ENCODE measurements at regions of chr4 and their contacts with region 1.

Region 1: DNA sequence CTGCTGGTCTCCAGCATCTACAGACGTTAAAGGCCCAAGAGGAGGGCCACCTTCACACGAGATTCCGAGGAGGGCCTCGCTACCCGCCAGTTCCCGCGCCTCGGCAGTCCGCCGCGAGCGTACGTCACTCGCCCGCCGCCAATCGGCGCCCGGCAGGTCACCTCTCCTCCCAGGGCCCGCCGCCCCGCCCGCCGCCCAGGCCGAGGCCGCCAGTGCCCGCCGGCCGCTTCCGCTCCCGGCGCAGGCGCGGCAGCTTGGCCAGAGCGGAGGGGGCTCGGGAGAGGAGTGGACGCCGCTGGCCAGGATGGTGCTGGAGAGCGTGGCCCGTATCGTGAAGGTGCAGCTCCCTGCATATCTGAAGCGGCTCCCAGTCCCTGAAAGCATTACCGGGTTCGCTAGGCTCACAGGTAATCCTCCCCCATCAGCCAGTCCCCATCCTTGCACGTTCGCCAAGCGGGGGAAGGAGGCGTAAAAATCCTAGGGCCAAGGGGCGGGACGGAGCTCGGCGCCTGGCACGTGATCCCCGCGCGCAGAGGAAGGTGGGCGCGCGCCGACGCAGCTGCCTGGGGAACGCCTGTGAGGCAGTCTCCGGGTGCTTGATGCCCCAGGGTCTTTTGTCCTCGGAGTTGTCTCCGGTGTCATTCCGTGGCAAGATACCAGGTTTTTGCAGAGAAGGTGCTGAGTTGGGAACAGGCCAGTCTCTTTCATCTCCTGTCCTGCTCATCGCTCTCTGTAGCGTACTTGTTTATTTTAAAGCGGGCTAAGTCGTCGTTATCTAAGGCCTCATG is at the start of gene CISD2:
- DNase-seq: peak; percentile 79 to 96 (median 86)
- ATAC-seq: peak; percentile 81
- H3K4me3 ChIP-seq: peak within 1 kb of the TSS; percentile 70
- H3K4me3 Mint-ChIP-seq: peak within 1 kb of the TSS; percentile 87
- H3K27ac ChIP-seq: peak within 1 kb of the TSS; percentile 94 to 96
- H3K27ac Mint-ChIP-seq: peak within 1 kb of the TSS; percentile 98
- H3K4me1 ChIP-seq: peaks cover 21% of the 10 kb centered on the region
- H3K4me1 Mint-ChIP-seq: peaks cover 77% of the 10 kb centered on the region
- H3K27me3 ChIP-seq: no peaks in the 10 kb centered on the region
- H3K27me3 Mint-ChIP-seq: no peaks in the 10 kb centered on the region
- CTCF ChIP-seq: no peak
- total RNA-seq, gene CISD2: 12.8 to 13.7 TPM

Region 2: DNA sequence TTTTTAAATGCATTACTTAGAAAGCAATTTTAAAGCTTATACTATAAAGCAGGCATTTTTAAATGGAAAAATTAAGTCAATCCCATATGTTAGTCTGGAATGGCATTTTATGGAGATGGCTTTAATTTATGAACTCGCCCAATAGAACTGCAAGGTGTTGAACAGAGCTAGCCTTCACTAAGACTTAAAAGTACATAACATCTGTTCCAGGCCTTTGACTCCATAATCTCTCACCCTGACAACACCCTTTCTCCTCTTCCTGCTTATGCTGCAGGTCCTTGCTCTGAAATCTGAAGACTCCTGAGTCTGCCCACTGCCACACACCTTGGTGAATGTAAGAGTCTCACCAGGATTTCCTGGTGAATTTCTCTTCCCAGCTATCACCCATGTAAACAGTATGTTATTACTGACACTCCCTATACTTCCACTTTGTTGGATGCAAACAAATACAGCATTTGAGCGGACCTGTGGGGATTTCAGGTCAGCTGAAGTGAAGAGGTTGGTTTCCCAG is 506.0 kb before region 1 on chr4:
- CTCF ChIA-PET with region 1: no interaction called
- POLR2A ChIA-PET with region 1: no interaction called
- intact Hi-C with region 1: no loop called
- DNase-seq: no peak
- ATAC-seq: no peak
- H3K4me3 ChIP-seq: no peak overlapping the region
- H3K4me3 Mint-ChIP-seq: no peak overlapping the region
- H3K27ac ChIP-seq: no peak overlapping the region
- H3K27ac Mint-ChIP-seq: no peak overlapping the region
- H3K4me1 ChIP-seq: no peaks in the 10 kb centered on the region
- H3K4me1 Mint-ChIP-seq: no peaks in the 10 kb centered on the region
- H3K27me3 ChIP-seq: no peaks in the 10 kb centered on the region
- H3K27me3 Mint-ChIP-seq: no peaks in the 10 kb centered on the region
- CTCF ChIP-seq: no peak

Region 3: DNA sequence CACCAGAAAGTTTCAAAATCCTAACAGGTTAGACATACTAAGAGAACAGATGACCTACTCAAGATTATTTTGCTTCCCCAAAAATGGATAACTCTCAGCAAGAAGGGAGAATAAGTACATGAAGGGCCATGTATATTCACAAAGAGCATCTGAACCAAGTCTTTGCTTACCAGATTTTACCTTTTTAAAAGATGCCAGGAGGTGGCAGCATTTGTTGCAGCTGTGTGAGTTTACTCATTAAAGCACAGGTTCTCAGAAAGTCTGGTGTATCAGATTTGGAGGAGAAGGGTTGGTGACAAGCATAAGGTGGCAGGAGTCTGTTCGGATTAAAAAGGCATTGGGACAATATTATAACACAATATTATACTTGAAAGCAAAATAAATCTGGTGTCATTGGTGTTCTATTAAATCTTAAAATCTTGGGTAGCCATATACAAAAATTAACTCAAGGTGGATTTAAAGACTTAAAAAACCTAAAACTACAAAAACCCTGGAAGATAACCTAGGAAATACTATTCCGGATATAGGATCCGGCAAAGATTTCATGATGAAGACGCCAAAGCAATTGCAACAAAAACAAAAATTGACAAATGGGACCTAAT is 419.1 kb before region 1 on chr4:
- CTCF ChIA-PET with region 1: no interaction called
- POLR2A ChIA-PET with region 1: no interaction called
- intact Hi-C with region 1: loop called in 1 of 2 experiments (anchors 5 kb)
- DNase-seq: peak in 13 of 14 experiments; percentile 14 to 84 (median 36)
- ATAC-seq: peak; percentile 78
- H3K4me3 ChIP-seq: no peak overlapping the region
- H3K4me3 Mint-ChIP-seq: no peak overlapping the region
- H3K27ac ChIP-seq: no peak overlapping the region
- H3K27ac Mint-ChIP-seq: no peak overlapping the region
- H3K4me1 ChIP-seq: no peaks in the 10 kb centered on the region
- H3K4me1 Mint-ChIP-seq: peaks cover 12% of the 10 kb centered on the region
- H3K27me3 ChIP-seq: no peaks in the 10 kb centered on the region
- H3K27me3 Mint-ChIP-seq: no peaks in the 10 kb centered on the region
- CTCF ChIP-seq: peak; percentile 87

Region 4: DNA sequence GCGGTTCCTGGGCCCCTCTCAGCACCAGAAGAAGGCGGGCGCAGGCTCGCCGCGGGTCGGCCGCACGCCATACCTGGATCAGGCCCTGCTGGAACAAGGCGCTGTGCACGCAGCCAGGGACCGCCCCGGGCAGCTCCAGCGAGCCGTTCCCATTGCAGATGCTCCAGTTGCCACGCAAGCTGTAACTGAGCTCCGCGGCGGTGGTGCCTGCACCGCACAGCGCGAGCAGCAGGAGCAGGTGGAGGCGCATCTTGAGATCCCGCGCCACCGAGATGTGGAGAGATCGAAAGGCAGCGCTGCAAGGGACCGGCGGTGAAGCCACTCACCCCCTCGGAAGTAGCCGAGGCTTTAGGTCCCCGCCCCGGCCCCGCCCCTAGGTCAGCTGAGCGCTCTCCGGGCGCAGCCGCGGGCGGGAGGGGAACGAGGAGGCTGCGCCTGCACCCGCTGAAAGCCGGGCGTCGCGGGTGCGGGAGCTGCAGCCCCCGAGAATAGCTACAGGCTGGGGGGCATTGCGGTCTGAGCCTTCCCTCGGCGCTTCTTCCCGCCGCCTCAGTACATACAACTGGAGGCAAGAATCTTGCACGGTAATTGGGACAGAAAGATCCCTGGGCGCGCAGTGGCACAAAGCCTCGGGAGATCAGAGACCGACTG is 108.2 kb before region 1 on chr4 and contains the start of gene MANBA:
- CTCF ChIA-PET with region 1: no interaction called
- POLR2A ChIA-PET with region 1: interaction called, 39 read pairs
- intact Hi-C with region 1: loop called (anchors 2 to 5 kb)
- DNase-seq: peak; percentile 66 to 92 (median 81)
- ATAC-seq: peak; percentile 83
- H3K4me3 ChIP-seq: peak within 1 kb of the TSS; percentile 84
- H3K4me3 Mint-ChIP-seq: peak within 1 kb of the TSS; percentile 95
- H3K27ac ChIP-seq: peak within 1 kb of the TSS; percentile 51 to 67
- H3K27ac Mint-ChIP-seq: peak within 1 kb of the TSS; percentile 88
- H3K4me1 ChIP-seq: peaks cover 16% of the 10 kb centered on the region
- H3K4me1 Mint-ChIP-seq: peaks cover 48% of the 10 kb centered on the region
- H3K27me3 ChIP-seq: no peaks in the 10 kb centered on the region
- H3K27me3 Mint-ChIP-seq: no peaks in the 10 kb centered on the region
- CTCF ChIP-seq: no peak
- total RNA-seq, gene MANBA: 16.9 to 18.2 TPM

Region 5: GRCh38 chr4:102836596-102836995 is 32.4 kb before region 1 on chr4:
- CTCF ChIA-PET with region 1: interaction called, 3 read pairs
- POLR2A ChIA-PET with region 1: interaction called, 419 read pairs
- intact Hi-C with region 1: no loop called
- DNase-seq: no peak
- ATAC-seq: no peak
- H3K4me3 ChIP-seq: no peak overlapping the region
- H3K4me3 Mint-ChIP-seq: no peak overlapping the region
- H3K27ac ChIP-seq: no peak overlapping the region
- H3K27ac Mint-ChIP-seq: no peak overlapping the region
- H3K4me1 ChIP-seq: no peaks in the 10 kb centered on the region
- H3K4me1 Mint-ChIP-seq: peaks cover 19% of the 10 kb centered on the region
- H3K27me3 ChIP-seq: no peaks in the 10 kb centered on the region
- H3K27me3 Mint-ChIP-seq: no peaks in the 10 kb centered on the region
- CTCF ChIP-seq: no peak

Region 6: GRCh38 chr4:103019308-103020124 is 150.5 kb after region 1 on chr4 and contains the start of gene SLC9B1:
- CTCF ChIA-PET with region 1: no interaction called
- POLR2A ChIA-PET with region 1: interaction called, 5 read pairs
- intact Hi-C with region 1: loop called in 1 of 2 experiments (anchors 5 kb)
- DNase-seq: peak; percentile 84 to 96 (median 91)
- ATAC-seq: peak; percentile 89
- H3K4me3 ChIP-seq: peak within 1 kb of the TSS; percentile 64
- H3K4me3 Mint-ChIP-seq: peak within 1 kb of the TSS; percentile 91
- H3K27ac ChIP-seq: peak within 1 kb of the TSS; percentile 65 to 94
- H3K27ac Mint-ChIP-seq: peak within 1 kb of the TSS; percentile 99
- H3K4me1 ChIP-seq: peaks cover 22% of the 10 kb centered on the region
- H3K4me1 Mint-ChIP-seq: peaks cover 25% of the 10 kb centered on the region
- H3K27me3 ChIP-seq: no peaks in the 10 kb centered on the region
- H3K27me3 Mint-ChIP-seq: no peaks in the 10 kb centered on the region
- CTCF ChIP-seq: no peak
- total RNA-seq, gene SLC9B1: 3.6 to 3.7 TPM

Region 7: GRCh38 chr4:103099691-103100392 is 230.9 kb after region 1 on chr4 and contains the start of gene BDH2:
- CTCF ChIA-PET with region 1: interaction called, 3 read pairs
- POLR2A ChIA-PET with region 1: no interaction called
- intact Hi-C with region 1: loop called in 1 of 2 experiments (anchors 10 kb)
- DNase-seq: peak in 10 of 14 experiments; percentile 7 to 92 (median 36)
- ATAC-seq: peak; percentile 99
- H3K4me3 ChIP-seq: peak within 1 kb of the TSS; percentile 52
- H3K4me3 Mint-ChIP-seq: peak within 1 kb of the TSS; percentile 92
- H3K27ac ChIP-seq: no peak within 1 kb of the TSS
- H3K27ac Mint-ChIP-seq: peak within 1 kb of the TSS; percentile 79
- H3K4me1 ChIP-seq: peaks cover 14% of the 10 kb centered on the region
- H3K4me1 Mint-ChIP-seq: peaks cover 33% of the 10 kb centered on the region
- H3K27me3 ChIP-seq: no peaks in the 10 kb centered on the region
- H3K27me3 Mint-ChIP-seq: no peaks in the 10 kb centered on the region
- CTCF ChIP-seq: peak; percentile 82
- total RNA-seq, gene BDH2: 9.9 to 10.3 TPM